ENCODE measurements at regions of chr14 and their contacts with region 1.

Region 1: DNA sequence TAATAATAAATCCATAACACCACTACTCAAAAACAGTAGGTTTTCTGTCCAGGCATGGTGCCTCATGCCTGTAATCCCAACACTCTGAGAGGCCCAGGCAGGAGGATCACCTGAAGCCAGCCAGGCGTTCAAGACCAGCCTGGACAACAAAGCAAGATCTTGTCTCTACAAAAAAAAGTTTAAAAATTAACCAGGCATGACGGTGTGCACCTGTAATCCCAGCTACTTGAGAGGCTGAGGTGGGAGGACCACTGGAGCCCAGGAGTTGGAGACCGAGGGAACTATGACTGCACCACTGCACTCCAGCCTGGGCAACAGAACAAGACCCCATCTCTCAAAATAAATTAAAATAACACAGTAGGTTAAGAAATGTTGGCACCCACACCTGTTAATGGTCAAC is 44.5 kb upstream of the AP4S1 start:
- DNase-seq: no peak

Region 2: GRCh38 chr14:31084385-31084784 is 103.4 kb after region 1 on chr14:
- intact Hi-C with region 1: loop called (anchors 1 kb)
- DNase-seq: no peak

Region 3: DNA sequence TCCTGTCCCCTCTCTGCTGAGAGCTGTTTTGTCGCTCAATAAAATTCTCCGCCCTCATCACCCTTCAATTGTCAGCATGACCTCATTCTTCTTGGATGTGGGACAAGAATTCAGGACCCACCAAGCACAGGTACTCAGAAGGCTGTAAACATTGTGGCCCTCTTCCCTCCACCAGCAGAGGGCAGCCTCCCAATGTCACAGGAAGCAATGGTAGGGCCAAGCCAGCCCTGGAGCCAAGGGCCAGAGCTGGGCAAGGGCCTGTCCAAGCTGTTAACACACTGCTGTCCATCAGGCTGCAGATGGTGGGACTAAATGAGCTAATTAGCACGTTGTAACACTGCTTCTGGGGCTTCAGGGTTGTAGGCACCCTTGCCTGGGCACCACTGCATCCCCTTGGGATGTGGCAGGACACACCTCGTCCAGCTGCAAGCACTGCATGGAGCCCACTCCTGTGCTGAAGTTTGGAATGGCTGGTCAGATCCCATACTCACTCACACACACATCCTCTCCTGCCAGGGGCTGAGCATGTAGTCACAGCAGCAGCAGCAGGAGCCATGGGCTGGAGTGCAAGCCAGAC is 289.3 kb after region 1 on chr14:
- intact Hi-C with region 1: no loop called
- DNase-seq: peak in 1 of 10 donors; percentile 14

Region 4: GRCh38 chr14:31371646-31372045 is 390.7 kb after region 1 on chr14:
- intact Hi-C with region 1: no loop called
- DNase-seq: no peak

Measured in posterior cingulate gyrus (tissue), 11 donors.